CD4-positive, alpha-beta T cell (primary cell): ENCODE measurements at regions of chr19 and their contacts with region 1.

Region 1: GRCh38 chr19:21396893-21397572 is at the start of gene ZNF493:
- DNase-seq: peak; percentile 81 to 97 (median 86)
- ATAC-seq: peak; percentile 99
- H3K4me3 ChIP-seq: peak within 1 kb of the TSS; percentile 97
- H3K4me3 Mint-ChIP-seq: peak within 1 kb of the TSS; percentile 98
- H3K27ac ChIP-seq: peak within 1 kb of the TSS; percentile 47 to 72
- H3K27ac Mint-ChIP-seq: peak within 1 kb of the TSS; percentile 82
- H3K4me1 ChIP-seq: peaks cover 14% of the 10 kb centered on the region
- H3K4me1 Mint-ChIP-seq: peaks cover 43% of the 10 kb centered on the region
- H3K27me3 ChIP-seq: no peaks in the 10 kb centered on the region
- H3K27me3 Mint-ChIP-seq: no peaks in the 10 kb centered on the region
- CTCF ChIP-seq: no peak
- total RNA-seq, gene ZNF493: 39.5 to 41.2 TPM

Region 2: DNA sequence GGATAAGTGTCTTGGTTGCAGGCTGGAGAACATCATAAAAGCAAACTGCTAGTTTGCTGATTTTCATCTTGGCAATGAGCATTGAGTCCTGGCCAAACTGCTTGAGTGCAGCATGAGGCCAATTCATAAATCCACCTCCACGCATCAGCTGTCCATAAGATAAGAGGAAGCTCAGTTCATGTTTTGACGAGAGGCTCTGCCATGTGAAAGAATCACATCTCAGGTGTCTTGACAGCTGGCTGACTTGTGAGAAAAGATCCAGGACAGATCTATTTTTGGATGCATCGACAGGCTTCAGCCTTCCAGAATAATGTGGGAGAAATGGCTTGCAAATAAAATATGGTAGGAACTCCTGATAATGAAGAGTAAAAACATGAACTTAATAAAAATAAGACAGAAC is 1352.4 kb before region 1 on chr19:
- CTCF ChIA-PET with region 1: no interaction called
- POLR2A ChIA-PET with region 1: interaction called, 4 read pairs
- intact Hi-C with region 1: loop called in 1 of 2 experiments (anchors 10 kb)
- DNase-seq: no peak
- ATAC-seq: no peak
- H3K4me3 ChIP-seq: no peak overlapping the region
- H3K4me3 Mint-ChIP-seq: no peak overlapping the region
- H3K27ac ChIP-seq: no peak overlapping the region
- H3K27ac Mint-ChIP-seq: no peak overlapping the region
- H3K4me1 ChIP-seq: peaks cover 2% of the 10 kb centered on the region
- H3K4me1 Mint-ChIP-seq: peaks cover under 1% of the 10 kb centered on the region
- H3K27me3 ChIP-seq: peaks cover 0 to 5% of the 10 kb centered on the region in 2 experiments
- H3K27me3 Mint-ChIP-seq: peaks cover 15% of the 10 kb centered on the region
- CTCF ChIP-seq: no peak

Region 3: GRCh38 chr19:21141787-21142464 is 255.1 kb before region 1 on chr19 and contains the start of gene ZNF431:
- CTCF ChIA-PET with region 1: no interaction called
- POLR2A ChIA-PET with region 1: interaction called, 6 read pairs
- intact Hi-C with region 1: loop called in 1 of 2 experiments (anchors 2 kb)
- DNase-seq: peak; percentile 79 to 96 (median 84)
- ATAC-seq: peak; percentile 99
- H3K4me3 ChIP-seq: peak within 1 kb of the TSS; percentile 67
- H3K4me3 Mint-ChIP-seq: peak within 1 kb of the TSS; percentile 95
- H3K27ac ChIP-seq: peak within 1 kb of the TSS; percentile 25 to 37
- H3K27ac Mint-ChIP-seq: peak within 1 kb of the TSS; percentile 91
- H3K4me1 ChIP-seq: peaks cover 8% of the 10 kb centered on the region
- H3K4me1 Mint-ChIP-seq: peaks cover 45% of the 10 kb centered on the region
- H3K27me3 ChIP-seq: no peaks in the 10 kb centered on the region
- H3K27me3 Mint-ChIP-seq: no peaks in the 10 kb centered on the region
- CTCF ChIP-seq: no peak
- total RNA-seq, gene ZNF431: 24.6 to 25.9 TPM

Region 4: GRCh38 chr19:21358768-21359451 is 38.1 kb before region 1 on chr19 and contains the start of gene ZNF738:
- CTCF ChIA-PET with region 1: interaction called, 5 read pairs
- POLR2A ChIA-PET with region 1: interaction called, 22 read pairs
- intact Hi-C with region 1: loop called (anchors 2 to 5 kb)
- DNase-seq: peak; percentile 69 to 92 (median 74)
- ATAC-seq: peak; percentile 96
- H3K4me3 ChIP-seq: peak within 1 kb of the TSS; percentile 78
- H3K4me3 Mint-ChIP-seq: peak within 1 kb of the TSS; percentile 100
- H3K27ac ChIP-seq: peak within 1 kb of the TSS; percentile 46 to 63
- H3K27ac Mint-ChIP-seq: peak within 1 kb of the TSS; percentile 94
- H3K4me1 ChIP-seq: no peaks in the 10 kb centered on the region
- H3K4me1 Mint-ChIP-seq: peaks cover 18% of the 10 kb centered on the region
- H3K27me3 ChIP-seq: no peaks in the 10 kb centered on the region
- H3K27me3 Mint-ChIP-seq: no peaks in the 10 kb centered on the region
- CTCF ChIP-seq: no peak
- total RNA-seq, gene ZNF738: 4.7 to 5.0 TPM

Region 5: GRCh38 chr19:21580101-21580500 is 183.1 kb after region 1 on chr19:
- CTCF ChIA-PET with region 1: no interaction called
- POLR2A ChIA-PET with region 1: interaction called, 10 read pairs
- intact Hi-C with region 1: no loop called
- DNase-seq: peak in 3 of 14 experiments; percentile 16 to 55 (median 25)
- ATAC-seq: peak; percentile 65
- H3K4me3 ChIP-seq: no peak overlapping the region
- H3K4me3 Mint-ChIP-seq: peak overlapping the region; percentile 23
- H3K27ac ChIP-seq: peak overlapping the region in 1 of 2 donors; percentile 64
- H3K27ac Mint-ChIP-seq: peak overlapping the region; percentile 84
- H3K4me1 ChIP-seq: no peaks in the 10 kb centered on the region
- H3K4me1 Mint-ChIP-seq: peaks cover 51% of the 10 kb centered on the region
- H3K27me3 ChIP-seq: no peaks in the 10 kb centered on the region
- H3K27me3 Mint-ChIP-seq: no peaks in the 10 kb centered on the region
- CTCF ChIP-seq: no peak

Region 6: GRCh38 chr19:21835810-21836444 is 438.9 kb after region 1 on chr19 and contains the start of gene ZNF43:
- CTCF ChIA-PET with region 1: no interaction called
- POLR2A ChIA-PET with region 1: interaction called, 10 read pairs
- intact Hi-C with region 1: no loop called
- DNase-seq: peak; percentile 87 to 97 (median 91)
- ATAC-seq: peak; percentile 98
- H3K4me3 ChIP-seq: peak within 1 kb of the TSS; percentile 81
- H3K4me3 Mint-ChIP-seq: peak within 1 kb of the TSS; percentile 97
- H3K27ac ChIP-seq: peak within 1 kb of the TSS; percentile 82 to 83
- H3K27ac Mint-ChIP-seq: peak within 1 kb of the TSS; percentile 94
- H3K4me1 ChIP-seq: peaks cover 14% of the 10 kb centered on the region
- H3K4me1 Mint-ChIP-seq: peaks cover 33% of the 10 kb centered on the region
- H3K27me3 ChIP-seq: no peaks in the 10 kb centered on the region
- H3K27me3 Mint-ChIP-seq: no peaks in the 10 kb centered on the region
- CTCF ChIP-seq: no peak
- total RNA-seq, gene ZNF43: 26.1 to 30.2 TPM